Left cardiac atrium (tissue), 4 donors: ENCODE measurements at regions of chr1 and their contacts with region 1.

Region 1: GRCh38 chr1:58047265-58047858 is 499.2 kb downstream of the OMA1 start:
- DNase-seq: no peak
- ATAC-seq: peak in 1 of 2 donors; percentile 54

Region 2: DNA sequence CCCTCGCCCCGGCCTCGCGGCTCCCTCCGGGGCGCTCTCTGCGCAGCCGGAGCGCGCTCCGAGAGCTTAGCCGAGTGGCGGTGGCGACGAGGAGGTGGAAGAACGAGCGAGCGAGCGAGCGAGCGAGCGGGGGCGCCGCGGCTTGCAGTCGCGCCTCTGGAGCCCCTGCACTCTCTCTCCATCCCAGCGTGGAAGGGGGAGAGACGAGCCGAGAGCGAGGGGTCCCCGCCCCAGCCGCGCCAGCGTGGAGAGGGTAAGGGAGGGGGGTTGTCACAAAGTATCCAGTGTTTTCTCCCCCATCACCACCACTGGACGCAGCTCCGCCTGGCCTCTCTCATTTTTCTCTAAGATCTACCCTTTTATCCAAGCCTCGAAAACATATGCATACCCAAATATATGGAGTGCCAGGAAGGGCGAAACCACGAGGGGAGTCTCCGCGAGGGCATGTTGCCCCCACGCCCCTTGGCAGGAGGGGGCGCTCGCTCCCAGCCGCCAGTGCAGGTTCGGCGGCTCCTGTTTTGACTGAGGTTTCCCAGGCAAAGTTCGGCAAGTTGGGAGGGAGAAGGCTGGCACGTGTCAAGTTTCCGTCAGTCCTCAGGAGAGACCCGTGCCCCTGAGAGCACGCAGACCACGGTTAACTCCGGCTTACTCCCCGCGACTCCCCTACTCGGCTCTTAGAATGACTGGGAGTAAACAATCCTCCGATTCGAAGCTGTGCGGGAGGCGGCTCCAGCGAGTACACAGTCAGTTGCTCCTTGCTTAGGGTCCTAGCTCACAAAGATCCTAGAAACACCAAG is 622.9 kb before region 1 on chr1:
- intact Hi-C with region 1: loop called in 1 of 2 experiments (anchors 5 kb)
- DNase-seq: peak; percentile 33
- ATAC-seq: peak; percentile 51 to 66

Region 3: GRCh38 chr1:58017641-58018040 is 29.7 kb before region 1 on chr1:
- intact Hi-C with region 1: no loop called
- DNase-seq: no peak
- ATAC-seq: no peak